ENCODE measurements at regions of chr7 and their contacts with region 1.

Region 1: DNA sequence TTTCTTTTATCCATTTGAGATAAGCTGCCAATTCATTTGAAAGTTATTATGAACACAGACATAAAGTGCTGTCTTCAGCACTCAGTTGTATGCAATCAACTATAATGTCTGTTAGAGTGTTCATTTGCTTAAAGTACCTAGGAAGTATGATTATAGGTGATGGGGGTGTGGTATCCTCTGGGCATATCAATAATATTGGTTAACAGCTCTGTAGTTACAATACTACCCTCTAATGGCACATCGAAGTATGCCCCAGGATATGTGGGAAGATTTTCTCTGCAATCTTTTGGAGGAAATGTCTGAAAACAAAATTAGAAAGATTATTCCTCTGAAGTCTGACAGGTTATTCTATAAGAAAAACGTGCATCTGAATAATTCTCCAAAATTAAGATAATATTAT is 429.7 kb downstream of the ARL4A start:
- DNase-seq: peak; percentile 57
- ATAC-seq: peak; percentile 35; the same call in 1 of the 2 replicates
- H3K4me3 ChIP-seq: no peak overlapping the region
- H3K27ac ChIP-seq: no peak overlapping the region
- H3K4me1 ChIP-seq: peaks cover 3% of the 10 kb centered on the region; the same call in 1 of the 2 replicates
- H3K27me3 ChIP-seq: no peaks in the 10 kb centered on the region
- CTCF ChIP-seq: peak; percentile 85

Region 2: GRCh38 chr7:12638851-12639467 is 478.1 kb before region 1 on chr7:
- CTCF ChIA-PET with region 1: no interaction called
- POLR2A ChIA-PET with region 1: no interaction called
- intact Hi-C with region 1: loop called (anchors 2 kb)
- DNase-seq: peak; percentile 86
- ATAC-seq: peak; percentile 64
- H3K4me3 ChIP-seq: no peak overlapping the region
- H3K27ac ChIP-seq: no peak overlapping the region
- H3K4me1 ChIP-seq: peaks cover 4% of the 10 kb centered on the region; the same call in 1 of the 2 replicates
- H3K27me3 ChIP-seq: no peaks in the 10 kb centered on the region
- CTCF ChIP-seq: peak; percentile 74

Region 3: DNA sequence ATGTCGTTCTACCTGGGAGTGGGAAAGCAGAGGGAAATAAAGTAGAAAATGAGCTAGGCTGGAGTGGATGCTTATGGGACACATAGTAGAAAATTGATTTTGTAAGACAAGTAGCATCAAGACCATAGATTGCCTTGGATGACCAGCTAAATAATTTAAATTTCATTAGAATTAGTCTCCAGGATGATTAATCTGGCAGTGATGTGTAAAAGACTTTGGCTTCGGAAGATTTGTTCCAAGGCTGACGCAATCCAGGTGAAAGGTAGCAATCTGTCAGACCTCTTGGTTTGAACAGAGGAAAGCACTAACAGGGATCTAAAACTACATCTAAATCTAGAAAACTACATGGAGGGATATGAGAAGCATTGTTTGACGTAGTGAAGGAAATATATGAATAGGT is 193.1 kb before region 1 on chr7:
- CTCF ChIA-PET with region 1: no interaction called
- POLR2A ChIA-PET with region 1: no interaction called
- intact Hi-C with region 1: loop called (anchors 5 kb)
- DNase-seq: peak; percentile 91
- ATAC-seq: peak; percentile 79
- H3K4me3 ChIP-seq: no peak overlapping the region
- H3K27ac ChIP-seq: no peak overlapping the region
- H3K4me1 ChIP-seq: peaks cover 28% of the 10 kb centered on the region
- H3K27me3 ChIP-seq: no peaks in the 10 kb centered on the region
- CTCF ChIP-seq: no peak